ENCODE measurements at regions of chr20 and their contacts with region 1.

Region 1: GRCh38 chr20:50929299-50930138 is 1.7 kb downstream of the ADNP start:
- DNase-seq: peak; percentile 76 to 97 (median 90)
- ATAC-seq: peak; percentile 76
- H3K4me3 ChIP-seq: peak overlapping the region; percentile 66
- H3K4me3 Mint-ChIP-seq: peak overlapping the region; percentile 93
- H3K27ac ChIP-seq: peak overlapping the region; percentile 2 to 37
- H3K27ac Mint-ChIP-seq: peak overlapping the region; percentile 98
- H3K4me1 ChIP-seq: peaks cover 37% of the 10 kb centered on the region
- H3K4me1 Mint-ChIP-seq: peaks cover 69% of the 10 kb centered on the region
- H3K27me3 ChIP-seq: no peaks in the 10 kb centered on the region
- H3K27me3 Mint-ChIP-seq: no peaks in the 10 kb centered on the region
- CTCF ChIP-seq: peak; percentile 90

Region 2: DNA sequence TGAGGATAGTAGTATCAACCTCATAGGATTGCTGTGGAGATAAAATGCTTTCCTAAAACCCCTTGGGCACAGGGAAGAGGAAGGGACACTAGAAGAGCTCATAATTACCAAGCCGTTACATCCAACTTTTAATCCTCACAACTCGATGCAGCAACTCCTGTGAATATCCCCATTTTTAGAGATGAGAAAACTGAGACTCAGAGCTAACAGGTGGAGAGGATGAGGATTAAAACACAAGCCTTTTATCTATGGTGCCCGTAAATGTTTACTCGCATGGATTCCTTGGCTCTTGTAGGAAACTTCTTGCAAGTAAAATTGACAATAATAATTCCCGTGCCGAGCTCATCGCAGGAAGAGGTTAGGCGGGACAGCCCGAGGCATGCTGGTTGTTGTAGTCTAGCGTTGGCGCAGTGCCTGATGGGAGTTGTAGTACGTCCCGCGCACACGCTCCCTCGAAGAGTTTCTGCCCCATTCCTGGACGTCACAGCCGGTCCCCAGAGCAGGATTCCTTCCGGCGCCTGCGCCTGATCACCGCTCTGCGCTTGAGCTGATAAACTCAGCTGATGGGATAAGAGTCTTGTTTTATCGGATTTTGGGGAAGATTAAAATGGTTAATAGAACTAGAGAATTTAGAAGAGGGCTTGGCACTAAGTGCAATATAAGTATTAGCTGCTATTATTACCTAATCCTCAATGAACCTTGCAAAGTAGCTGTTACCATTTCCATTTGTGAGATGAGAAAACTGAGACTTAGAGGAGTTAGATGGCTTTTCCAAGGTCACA is 813.7 kb before region 1 on chr20:
- CTCF ChIA-PET with region 1: no interaction called
- POLR2A ChIA-PET with region 1: no interaction called
- intact Hi-C with region 1: loop called in 1 of 2 experiments (anchors 10 kb)
- DNase-seq: peak; percentile 82 to 97 (median 88)
- ATAC-seq: peak; percentile 83
- H3K4me3 ChIP-seq: peak overlapping the region; percentile 58
- H3K4me3 Mint-ChIP-seq: peak overlapping the region; percentile 92
- H3K27ac ChIP-seq: no peak overlapping the region
- H3K27ac Mint-ChIP-seq: peak overlapping the region; percentile 85
- H3K4me1 ChIP-seq: peaks cover 53% of the 10 kb centered on the region
- H3K4me1 Mint-ChIP-seq: peaks cover 53% of the 10 kb centered on the region
- H3K27me3 ChIP-seq: no peaks in the 10 kb centered on the region
- H3K27me3 Mint-ChIP-seq: no peaks in the 10 kb centered on the region
- CTCF ChIP-seq: no peak

Region 3: GRCh38 chr20:50790651-50791277 is 138.8 kb before region 1 on chr20:
- CTCF ChIA-PET with region 1: interaction called, 65 read pairs
- POLR2A ChIA-PET with region 1: interaction called, 157 read pairs
- intact Hi-C with region 1: loop called (anchors 1 kb)
- DNase-seq: peak; percentile 63 to 87 (median 78)
- ATAC-seq: peak; percentile 68
- H3K4me3 ChIP-seq: peak overlapping the region; percentile 25
- H3K4me3 Mint-ChIP-seq: no peak overlapping the region
- H3K27ac ChIP-seq: peak overlapping the region in 1 of 2 donors; percentile 71
- H3K27ac Mint-ChIP-seq: peak overlapping the region; percentile 44
- H3K4me1 ChIP-seq: peaks cover 27% of the 10 kb centered on the region
- H3K4me1 Mint-ChIP-seq: peaks cover 10% of the 10 kb centered on the region
- H3K27me3 ChIP-seq: no peaks in the 10 kb centered on the region
- H3K27me3 Mint-ChIP-seq: no peaks in the 10 kb centered on the region
- CTCF ChIP-seq: peak; percentile 81

Region 4: GRCh38 chr20:50904067-50904570 is 25.4 kb before region 1 on chr20:
- CTCF ChIA-PET with region 1: interaction called, 31 read pairs
- POLR2A ChIA-PET with region 1: interaction called, 8 read pairs
- intact Hi-C with region 1: no loop called
- DNase-seq: no peak
- ATAC-seq: no peak
- H3K4me3 ChIP-seq: no peak overlapping the region
- H3K4me3 Mint-ChIP-seq: no peak overlapping the region
- H3K27ac ChIP-seq: no peak overlapping the region
- H3K27ac Mint-ChIP-seq: peak overlapping the region; percentile 75
- H3K4me1 ChIP-seq: peaks cover 10% of the 10 kb centered on the region
- H3K4me1 Mint-ChIP-seq: peaks cover 75% of the 10 kb centered on the region
- H3K27me3 ChIP-seq: no peaks in the 10 kb centered on the region
- H3K27me3 Mint-ChIP-seq: no peaks in the 10 kb centered on the region
- CTCF ChIP-seq: no peak

Region 5: GRCh38 chr20:50943069-50943468 is 13.6 kb after region 1 on chr20:
- CTCF ChIA-PET with region 1: interaction called, 15 read pairs
- POLR2A ChIA-PET with region 1: interaction called, 16 read pairs
- intact Hi-C with region 1: no loop called
- DNase-seq: peak in 2 of 14 experiments; percentile 33
- ATAC-seq: no peak
- H3K4me3 ChIP-seq: no peak overlapping the region
- H3K4me3 Mint-ChIP-seq: no peak overlapping the region
- H3K27ac ChIP-seq: no peak overlapping the region
- H3K27ac Mint-ChIP-seq: no peak overlapping the region
- H3K4me1 ChIP-seq: no peaks in the 10 kb centered on the region
- H3K4me1 Mint-ChIP-seq: no peaks in the 10 kb centered on the region
- H3K27me3 ChIP-seq: no peaks in the 10 kb centered on the region
- H3K27me3 Mint-ChIP-seq: no peaks in the 10 kb centered on the region
- CTCF ChIP-seq: no peak

Measured in CD4-positive, alpha-beta T cell (primary cell).